Right cardiac atrium (tissue), 5 donors: ENCODE measurements at regions of chrX and their contacts with region 1.

Region 1: GRCh38 chrX:100685284-100685996 is 41.4 kb downstream of the SRPX2 start:
- DNase-seq: peak in 2 of 3 donors; percentile 20 to 48
- ATAC-seq: peak; percentile 63 to 77
- H3K4me3 ChIP-seq: no peak overlapping the region
- H3K27ac ChIP-seq: no peak overlapping the region
- H3K4me1 ChIP-seq: no peaks in the 10 kb centered on the region
- H3K27me3 ChIP-seq: no peaks in the 10 kb centered on the region

Region 2: GRCh38 chrX:100768679-100769338 is 83.4 kb after region 1 on chrX:
- intact Hi-C with region 1: loop called in 3 of 4 experiments (anchors 5 to 10 kb)
- DNase-seq: peak; percentile 75 to 91 (median 84)
- ATAC-seq: peak in 1 of 2 donors; percentile 45
- H3K4me3 ChIP-seq: no peak overlapping the region
- H3K27ac ChIP-seq: no peak overlapping the region
- H3K4me1 ChIP-seq: no peaks in the 10 kb centered on the region
- H3K27me3 ChIP-seq: no peaks in the 10 kb centered on the region

Region 3: DNA sequence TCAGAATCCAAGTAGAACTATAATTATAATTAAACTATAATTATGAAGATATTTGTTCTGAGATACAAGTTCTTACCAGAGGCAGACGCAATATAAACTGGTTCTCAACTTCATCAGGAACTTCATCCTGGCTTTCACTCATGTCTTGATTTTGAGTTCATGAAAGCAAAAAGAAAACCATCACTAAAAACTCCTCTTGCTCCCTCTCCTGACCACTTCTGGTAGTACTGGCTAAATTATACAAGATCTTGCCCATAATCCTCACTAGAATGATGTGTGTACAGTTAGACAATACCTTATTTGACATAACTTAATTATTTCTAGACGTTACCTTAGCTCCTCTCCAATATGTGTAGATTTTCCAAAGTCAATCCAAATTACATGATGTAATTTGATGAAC is 602.0 kb after region 1 on chrX:
- intact Hi-C with region 1: loop called in 1 of 4 experiments (anchors 10 kb)
- DNase-seq: no peak
- ATAC-seq: no peak
- H3K4me3 ChIP-seq: no peak overlapping the region
- H3K27ac ChIP-seq: no peak overlapping the region
- H3K4me1 ChIP-seq: no peaks in the 10 kb centered on the region
- H3K27me3 ChIP-seq: no peaks in the 10 kb centered on the region